Endothelial cell of umbilical vein (primary cell): ENCODE measurements at regions of chr7 and their contacts with region 1.

Region 1: GRCh38 chr7:116030651-116031276 is at the start of gene TFEC:
- DNase-seq: peak; percentile 62
- H3K4me3 ChIP-seq: peak within 1 kb of the TSS in 2 of 3 experiments; percentile 34 to 63
- H3K27ac ChIP-seq: peak within 1 kb of the TSS; percentile 58
- H3K4me1 ChIP-seq: peaks cover 16% of the 10 kb centered on the region
- H3K27me3 ChIP-seq: no peaks in the 10 kb centered on the region
- CTCF ChIP-seq: no peak
- POLR2A ChIP-seq: no peak
- total RNA-seq, gene TFEC: 7.9 TPM in 2 replicates

Region 2: GRCh38 chr7:116097365-116098009 is 66.7 kb after region 1 on chr7:
- CTCF ChIA-PET with region 1: no interaction called
- POLR2A ChIA-PET with region 1: no interaction called
- dilution Hi-C with region 1: no loop called
- intact Hi-C with region 1: loop called (anchors 2 kb)
- DNase-seq: peak; percentile 89
- H3K4me3 ChIP-seq: no peak overlapping the region
- H3K27ac ChIP-seq: peak overlapping the region; percentile 80
- H3K4me1 ChIP-seq: peaks cover 25% of the 10 kb centered on the region
- H3K27me3 ChIP-seq: no peaks in the 10 kb centered on the region
- CTCF ChIP-seq: no peak
- POLR2A ChIP-seq: no peak